Sigmoid colon (tissue), 7 donors: ENCODE measurements at regions of chr12 and their contacts with region 1.

Region 1: DNA sequence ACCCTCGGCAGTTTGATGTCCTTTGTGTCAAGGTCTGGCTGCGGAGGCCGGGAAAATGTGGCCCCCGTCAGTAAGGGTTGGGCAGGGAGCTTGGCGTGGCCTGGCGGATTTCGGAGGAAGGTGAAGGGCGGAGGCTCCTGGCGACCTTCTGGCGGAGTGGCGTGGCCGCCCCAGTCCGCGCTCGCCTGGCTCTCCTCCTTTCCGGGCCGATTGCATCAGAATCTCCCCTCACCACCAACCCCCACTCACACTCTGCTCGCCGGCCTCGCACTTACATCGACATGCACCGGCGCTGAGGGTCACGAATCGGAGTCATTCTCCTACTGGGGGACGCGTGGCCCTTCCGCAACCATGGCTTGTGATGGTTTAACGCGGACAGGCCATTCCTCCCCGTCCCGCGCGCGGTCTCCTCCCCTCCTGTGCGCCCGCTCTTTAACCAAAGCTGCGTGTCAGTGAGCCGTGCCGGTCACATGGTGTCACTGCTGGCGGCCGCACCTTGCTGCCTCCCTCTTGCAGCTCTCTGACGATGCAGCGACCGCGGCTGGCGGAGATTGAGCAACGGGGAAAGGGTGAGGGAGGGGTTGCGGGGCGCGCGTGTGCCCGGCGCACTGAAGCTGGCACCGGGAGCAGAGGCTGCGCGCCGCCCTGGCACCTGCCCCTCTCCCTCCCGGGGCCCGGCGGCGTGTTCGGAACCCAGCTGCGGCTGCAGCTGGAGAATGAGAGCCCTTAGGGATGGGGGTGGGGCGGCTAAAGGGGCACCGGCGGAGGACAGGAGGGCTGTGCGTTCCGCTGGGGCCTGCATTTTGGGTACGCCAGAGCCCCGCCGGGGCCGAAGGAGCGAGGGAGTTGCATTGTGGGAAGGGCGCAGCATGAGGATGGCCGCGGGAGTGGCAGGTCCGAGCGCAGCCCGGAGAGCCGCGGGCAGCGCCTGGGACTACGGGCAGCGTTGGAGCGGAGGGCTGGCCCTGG is at the start of gene SLC38A1:
- DNase-seq: peak; percentile 97
- H3K4me3 ChIP-seq: peak within 1 kb of the TSS; percentile 64 to 80 (median 74)
- H3K27ac ChIP-seq: peak within 1 kb of the TSS; percentile 89 to 93 (median 92)
- H3K4me1 ChIP-seq: peaks cover 0 to 40% (median 31%) of the 10 kb centered on the region in 4 donors
- H3K27me3 ChIP-seq: no peaks in the 10 kb centered on the region
- CTCF ChIP-seq: no peak
- EP300 ChIP-seq: peak in 1 of 4 donors; percentile 36
- POLR2A ChIP-seq: peak; percentile 80 to 87
- total RNA-seq, gene SLC38A1: 149 to 209 (median 177) TPM

Region 2: DNA sequence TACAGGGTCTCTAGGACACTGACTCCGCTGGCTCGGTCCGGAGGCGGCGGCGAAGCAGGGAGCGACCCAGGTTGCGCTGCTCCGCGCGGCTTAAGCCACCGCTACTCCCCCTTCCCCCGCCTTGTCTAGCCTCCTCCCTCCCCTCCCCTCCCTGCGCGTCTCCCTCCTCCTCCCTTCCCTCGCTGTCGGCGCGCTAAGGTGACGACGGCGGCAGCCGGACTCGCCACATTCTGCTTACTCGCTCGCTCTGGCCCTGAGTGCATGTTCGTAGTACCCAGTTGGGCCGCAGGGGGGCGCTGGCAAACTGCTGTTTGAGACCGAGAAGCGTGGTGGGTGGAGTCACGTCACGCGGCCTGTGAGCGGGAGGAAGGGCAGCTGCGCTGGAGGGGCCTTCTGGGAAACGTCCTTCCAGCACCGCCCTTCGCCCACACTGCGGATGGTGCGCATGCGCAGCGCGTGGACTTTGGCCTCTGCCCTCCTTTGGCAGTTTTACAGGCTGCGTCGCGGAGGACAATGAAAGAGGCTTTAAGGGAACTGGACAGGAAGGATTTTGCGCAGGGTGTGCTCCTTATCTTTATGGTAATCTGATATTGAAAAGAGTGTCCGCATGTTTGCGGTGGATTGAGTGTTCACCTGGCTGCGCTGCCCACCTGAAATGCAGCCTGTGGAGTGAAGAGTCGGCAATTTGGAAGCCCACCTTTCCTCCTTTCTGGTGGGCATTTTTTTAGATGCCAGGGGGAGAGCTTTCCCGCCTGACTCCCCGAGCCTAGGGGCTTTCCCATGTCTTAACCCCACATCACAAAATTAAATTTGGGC is 278.2 kb before region 1 on chr12 and contains the start of gene SCAF11:
- intact Hi-C with region 1: loop called (anchors 10 kb)
- DNase-seq: peak; percentile 100
- H3K4me3 ChIP-seq: peak within 1 kb of the TSS; percentile 71 to 92 (median 82)
- H3K27ac ChIP-seq: peak within 1 kb of the TSS; percentile 96 to 99 (median 98)
- H3K4me1 ChIP-seq: peaks cover 0 to 45% (median 36%) of the 10 kb centered on the region in 4 donors
- H3K27me3 ChIP-seq: no peaks in the 10 kb centered on the region
- CTCF ChIP-seq: peak; percentile 89 to 99 (median 96)
- EP300 ChIP-seq: peak in 2 of 4 donors; percentile 22 to 80
- POLR2A ChIP-seq: peak; percentile 90 to 95
- total RNA-seq, gene SCAF11: 116 to 165 (median 127) TPM

Region 3: DNA sequence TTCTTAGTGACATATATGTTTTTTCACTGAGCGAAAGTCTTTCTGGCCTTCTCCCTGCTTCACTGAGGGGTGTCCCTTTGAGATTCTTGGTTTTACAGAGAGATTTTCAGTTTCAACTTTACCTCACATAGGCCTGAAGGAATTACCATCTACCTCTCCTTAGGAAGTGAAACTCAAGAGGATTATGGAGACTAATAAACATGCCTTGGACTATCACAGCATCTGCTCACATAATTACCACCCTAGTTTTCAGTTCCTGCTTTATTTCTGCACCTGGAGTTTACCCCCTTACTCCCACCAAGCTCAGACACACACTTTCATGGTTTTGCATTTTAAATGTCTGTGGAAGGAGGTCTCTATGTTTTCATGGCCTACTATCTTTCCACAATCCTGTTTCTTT is 160.2 kb before region 1 on chr12:
- intact Hi-C with region 1: no loop called
- DNase-seq: no peak
- H3K4me3 ChIP-seq: no peak overlapping the region
- H3K27ac ChIP-seq: no peak overlapping the region
- H3K4me1 ChIP-seq: no peaks in the 10 kb centered on the region
- H3K27me3 ChIP-seq: no peaks in the 10 kb centered on the region
- CTCF ChIP-seq: no peak
- EP300 ChIP-seq: no peak
- POLR2A ChIP-seq: no peak

Region 4: DNA sequence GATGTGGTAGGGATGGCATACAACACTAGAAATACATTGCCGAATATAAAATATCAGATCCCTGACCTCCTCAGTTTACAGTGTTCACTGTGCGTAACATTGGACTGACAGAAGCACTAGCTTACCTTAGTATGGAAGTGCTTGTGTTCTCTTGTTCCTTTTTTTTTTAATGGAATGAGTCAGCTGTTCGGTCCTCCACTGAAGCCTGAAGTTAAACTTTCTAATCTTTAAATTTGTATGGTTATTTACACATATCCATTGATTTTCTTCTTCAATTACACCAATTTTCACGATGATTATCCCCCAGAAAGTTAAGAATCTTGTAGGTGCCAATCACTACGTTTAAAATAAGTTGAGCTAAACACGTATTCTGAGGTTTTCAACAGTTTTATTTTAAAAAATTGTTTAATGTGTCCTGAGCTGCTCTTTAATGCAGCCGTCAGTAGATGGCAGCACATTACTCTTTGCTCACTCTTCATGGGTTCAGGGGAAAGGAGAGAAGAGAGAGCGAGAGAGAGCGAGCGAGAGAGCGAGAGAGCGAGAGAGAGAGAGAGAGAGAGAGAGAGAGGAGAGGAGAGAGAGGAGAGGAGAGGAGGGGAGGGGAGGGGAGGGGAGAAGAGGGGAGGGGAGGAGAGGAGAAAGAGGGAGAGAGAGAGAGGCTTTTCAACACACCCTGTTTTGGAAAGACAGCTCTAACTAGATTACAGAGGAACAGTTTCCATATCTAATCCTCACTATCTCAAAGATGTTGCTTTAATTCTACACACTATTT is 143.8 kb before region 1 on chr12:
- intact Hi-C with region 1: loop called (anchors 10 kb)
- DNase-seq: peak; percentile 75
- H3K4me3 ChIP-seq: peak overlapping the region in 3 of 4 donors; percentile 24 to 34 (median 31)
- H3K27ac ChIP-seq: peak overlapping the region; percentile 8 to 54 (median 44)
- H3K4me1 ChIP-seq: peaks cover 0 to 22% (median 20%) of the 10 kb centered on the region in 4 donors
- H3K27me3 ChIP-seq: no peaks in the 10 kb centered on the region
- CTCF ChIP-seq: peak; percentile 61 to 86 (median 75)
- EP300 ChIP-seq: no peak
- POLR2A ChIP-seq: no peak

Region 5: DNA sequence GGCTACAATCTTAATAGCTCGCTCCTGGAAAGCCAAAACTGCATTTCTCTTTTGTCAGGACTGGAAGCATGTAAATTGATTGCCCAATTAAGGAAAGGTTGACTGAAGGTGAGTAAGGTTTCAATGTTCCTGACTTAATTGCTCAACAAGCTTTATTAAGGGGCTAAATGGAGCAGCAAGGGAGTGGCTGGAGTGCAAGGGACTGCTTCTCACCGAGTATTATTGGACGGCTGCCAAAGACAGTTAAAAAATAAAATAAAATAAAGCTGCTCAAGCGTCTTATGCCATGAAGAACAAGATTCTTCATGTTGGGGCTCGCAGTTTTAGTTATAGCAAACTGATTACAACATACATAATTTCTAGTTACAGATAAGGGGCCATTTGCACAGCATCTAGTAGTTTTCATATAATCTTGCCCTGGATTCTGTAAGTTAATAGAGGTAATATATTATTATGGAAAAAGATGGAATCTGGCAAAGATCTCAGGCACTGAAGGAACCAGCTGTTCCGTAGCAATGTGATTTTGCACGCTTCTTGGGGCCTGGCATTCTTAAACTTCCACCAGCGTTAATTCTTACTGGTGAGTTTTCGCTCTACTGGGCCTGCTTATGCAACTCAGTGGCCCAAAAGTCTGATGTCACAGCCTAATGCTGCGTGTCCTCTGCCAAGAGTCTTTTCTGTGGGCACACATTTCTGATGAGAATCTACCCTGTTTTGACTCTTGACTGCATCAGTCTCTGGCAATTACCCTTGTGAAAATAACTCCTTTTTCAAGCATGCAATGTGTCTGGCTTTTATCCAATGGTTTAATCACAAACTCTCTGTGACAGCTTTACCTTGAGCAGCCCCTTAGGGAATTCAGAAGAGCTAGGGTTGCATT is 108.5 kb before region 1 on chr12:
- intact Hi-C with region 1: loop called (anchors 2 kb)
- DNase-seq: peak; percentile 70
- H3K4me3 ChIP-seq: peak overlapping the region in 1 of 4 donors; percentile 2
- H3K27ac ChIP-seq: peak overlapping the region; percentile 69 to 84 (median 77)
- H3K4me1 ChIP-seq: peaks cover 0 to 51% (median 47%) of the 10 kb centered on the region in 4 donors
- H3K27me3 ChIP-seq: no peaks in the 10 kb centered on the region
- CTCF ChIP-seq: no peak
- EP300 ChIP-seq: peak in 3 of 4 donors; percentile 11 to 49 (median 33)
- POLR2A ChIP-seq: no peak

Region 6: DNA sequence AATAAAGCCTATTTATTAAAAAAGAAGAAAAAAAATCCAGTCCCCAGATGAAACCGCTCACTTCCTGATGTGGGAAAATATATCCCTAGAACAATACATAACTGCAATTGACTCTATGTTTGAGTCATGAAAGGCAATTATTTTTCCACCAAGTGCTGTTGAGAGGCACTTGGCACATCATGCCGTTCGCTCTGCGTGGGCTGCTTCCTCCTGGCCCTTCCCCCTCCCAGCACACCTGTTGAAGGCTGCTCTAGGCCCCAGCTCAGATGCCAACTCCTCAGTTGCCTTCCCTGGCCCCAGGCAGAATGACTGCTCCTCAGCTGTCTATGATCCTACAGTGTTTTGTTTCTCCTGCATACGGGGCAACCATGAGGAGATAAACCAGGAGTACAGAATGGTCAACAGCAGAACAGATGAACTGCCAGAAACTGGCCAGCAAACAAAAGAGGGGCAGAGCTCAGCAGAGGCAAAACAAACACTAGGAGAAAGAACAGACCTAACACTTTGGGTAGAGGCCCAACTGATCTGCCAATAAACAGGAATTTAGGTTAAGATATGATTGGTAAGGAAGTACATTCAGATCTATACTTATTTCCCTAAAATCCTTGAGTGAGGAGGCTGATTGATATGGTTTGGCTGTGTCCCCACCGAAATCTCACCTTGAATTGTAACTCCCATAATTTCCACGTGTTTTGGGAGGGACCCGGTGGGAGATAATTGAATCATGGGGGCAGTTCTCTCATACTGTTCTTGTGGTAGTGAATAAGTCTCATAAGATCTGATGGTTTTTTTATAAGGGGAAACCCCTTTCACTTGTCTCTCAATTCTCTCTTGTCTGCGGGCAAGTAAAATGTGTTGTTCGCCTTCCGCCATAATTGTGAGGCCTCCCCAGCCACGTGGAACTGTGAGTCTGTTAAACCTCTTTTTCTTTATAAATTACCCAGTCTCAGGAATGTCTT is 58.7 kb before region 1 on chr12:
- intact Hi-C with region 1: loop called (anchors 1 kb)
- DNase-seq: peak; percentile 72
- H3K4me3 ChIP-seq: no peak overlapping the region
- H3K27ac ChIP-seq: peak overlapping the region; percentile 73 to 79 (median 76)
- H3K4me1 ChIP-seq: peaks cover 0 to 100% (median 77%) of the 10 kb centered on the region in 4 donors
- H3K27me3 ChIP-seq: no peaks in the 10 kb centered on the region
- CTCF ChIP-seq: no peak
- EP300 ChIP-seq: peak in 1 of 4 donors; percentile 8
- POLR2A ChIP-seq: no peak

Region 7: DNA sequence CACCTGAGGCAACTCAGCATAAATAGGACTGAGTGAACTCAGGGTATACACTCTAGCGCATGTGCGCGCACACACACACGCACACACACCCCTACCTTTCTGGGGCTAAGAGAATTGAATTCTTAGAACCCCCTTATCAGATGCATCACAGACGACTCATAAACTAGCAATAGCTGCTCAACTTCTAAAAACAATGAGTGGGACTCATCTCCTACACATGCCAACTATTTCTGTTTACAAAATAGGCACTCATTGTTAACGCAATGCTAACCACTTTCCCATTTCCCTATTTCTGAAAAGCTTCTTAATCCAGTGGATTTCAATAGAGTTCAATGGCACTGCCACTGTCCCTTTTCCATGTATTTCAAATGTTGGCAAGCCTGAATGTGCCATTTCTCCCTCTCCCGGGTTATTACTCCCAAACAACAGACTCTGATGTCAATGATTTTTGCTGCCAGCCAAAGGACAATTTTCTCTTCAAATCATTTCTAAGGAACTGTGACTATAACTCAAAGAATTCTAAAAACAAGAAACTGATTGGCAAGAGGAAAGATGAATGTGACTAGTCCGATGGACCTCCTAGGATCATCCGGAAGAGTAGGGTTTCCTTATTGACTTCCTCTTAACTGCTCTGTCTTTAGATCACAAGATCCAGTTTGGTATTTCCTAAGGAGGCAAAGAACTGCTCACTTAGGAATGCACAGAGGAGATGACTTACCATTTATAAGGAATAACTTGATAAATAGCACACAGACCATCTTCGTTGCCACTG is 48.8 kb before region 1 on chr12:
- intact Hi-C with region 1: loop called (anchors 2 kb)
- DNase-seq: no peak
- H3K4me3 ChIP-seq: no peak overlapping the region
- H3K27ac ChIP-seq: peak overlapping the region; percentile 73 to 84 (median 80)
- H3K4me1 ChIP-seq: peaks cover 0 to 96% (median 74%) of the 10 kb centered on the region in 4 donors
- H3K27me3 ChIP-seq: no peaks in the 10 kb centered on the region
- CTCF ChIP-seq: no peak
- EP300 ChIP-seq: no peak
- POLR2A ChIP-seq: no peak